Heart left ventricle (tissue), 16 donors: ENCODE measurements at regions of chr6 and their contacts with region 1.

Region 1: GRCh38 chr6:118893807-118894424 is at the start of gene ASF1A:
- DNase-seq: peak; percentile 96 to 98 (median 98)
- ATAC-seq: peak; percentile 93 to 97 (median 95)
- H3K4me3 ChIP-seq: peak within 1 kb of the TSS; percentile 73 to 99 (median 90)
- H3K27ac ChIP-seq: peak within 1 kb of the TSS; percentile 86 to 98 (median 94)
- H3K4me1 ChIP-seq: peaks cover 0 to 59% (median 27%) of the 10 kb centered on the region in 12 donors
- H3K27me3 ChIP-seq: no peaks in the 10 kb centered on the region
- CTCF ChIP-seq: peak; percentile 34 to 81 (median 56)
- POLR2A ChIP-seq: peak; percentile 48 to 76
- total RNA-seq, gene ASF1A: 9.8 to 28.9 (median 22.1) TPM

Region 2: DNA sequence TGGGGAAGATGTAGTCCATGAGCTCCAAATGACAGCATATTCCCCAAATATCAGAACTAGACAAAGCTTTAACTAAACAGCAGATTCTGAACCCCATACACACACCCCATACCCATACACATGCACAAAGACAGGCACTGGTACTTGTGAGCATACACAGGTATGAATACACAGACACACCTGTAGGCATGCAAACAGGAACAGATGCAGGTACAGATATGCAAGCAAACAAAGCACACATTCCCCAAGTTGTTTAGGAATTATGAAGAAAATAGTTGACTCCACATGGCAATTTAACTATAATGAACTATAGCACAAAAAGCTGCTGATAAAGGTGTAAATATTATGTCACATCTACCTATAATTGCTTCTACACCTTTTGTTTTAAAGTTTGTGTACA is 1308.3 kb before region 1 on chr6:
- intact Hi-C with region 1: loop called in 1 of 10 experiments (anchors 10 kb)
- DNase-seq: no peak
- ATAC-seq: no peak
- H3K4me3 ChIP-seq: no peak overlapping the region
- H3K27ac ChIP-seq: no peak overlapping the region
- H3K4me1 ChIP-seq: peaks cover 0 to 7% (median 0%) of the 10 kb centered on the region in 12 donors
- H3K27me3 ChIP-seq: no peaks in the 10 kb centered on the region
- CTCF ChIP-seq: no peak
- POLR2A ChIP-seq: no peak

Region 3: DNA sequence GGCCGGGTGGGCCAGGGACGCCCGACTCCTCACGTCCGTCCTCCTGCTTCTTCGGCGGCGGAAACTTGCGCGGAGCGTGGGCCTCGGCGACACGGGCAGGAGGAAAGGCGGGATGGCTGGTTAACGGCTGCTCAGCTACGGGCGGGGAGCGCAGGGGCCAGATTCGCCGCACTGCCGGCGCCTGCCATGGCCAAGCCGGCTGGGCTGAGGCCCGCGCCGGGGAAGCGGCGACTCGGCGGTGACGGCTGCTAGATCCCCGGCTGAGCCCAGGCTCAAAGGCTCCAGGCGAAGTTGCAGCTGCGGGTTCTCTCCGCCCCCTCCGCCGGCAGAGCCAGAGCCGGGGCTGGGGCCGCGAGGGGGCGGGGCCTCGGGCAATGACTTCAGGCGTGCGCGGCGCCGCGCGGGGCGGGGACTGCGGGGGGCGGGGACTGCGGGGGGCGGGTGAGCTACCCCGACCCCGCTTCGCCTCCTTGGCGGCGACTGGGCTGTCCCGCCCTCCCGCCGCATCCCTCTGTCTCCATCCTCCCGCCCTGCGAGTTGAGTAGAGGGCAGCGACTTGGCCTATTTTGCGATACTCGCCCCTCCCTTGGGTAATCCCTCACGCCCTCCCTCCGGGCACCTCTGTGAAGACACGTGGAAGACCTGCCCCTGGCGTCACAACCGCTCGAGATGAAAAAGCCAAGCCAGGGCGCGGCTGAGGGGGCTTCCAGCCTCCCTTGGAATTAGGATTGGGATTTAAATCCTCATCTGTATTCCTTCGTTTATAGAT is 242.4 kb before region 1 on chr6 and contains the start of gene CEP85L:
- intact Hi-C with region 1: loop called in 1 of 10 experiments (anchors 10 kb)
- DNase-seq: peak; percentile 93 to 96 (median 94)
- ATAC-seq: peak; percentile 95 to 99 (median 98)
- H3K4me3 ChIP-seq: peak within 1 kb of the TSS; percentile 69 to 98 (median 93)
- H3K27ac ChIP-seq: peak within 1 kb of the TSS; percentile 86 to 99 (median 96)
- H3K4me1 ChIP-seq: peaks cover 5 to 30% (median 13%) of the 10 kb centered on the region in 12 donors
- H3K27me3 ChIP-seq: no peaks in the 10 kb centered on the region
- CTCF ChIP-seq: peak in 1 of 12 donors; percentile 5
- POLR2A ChIP-seq: peak; percentile 38 to 91
- total RNA-seq, gene CEP85L: 5.1 to 14.4 (median 7.6) TPM

Region 4: DNA sequence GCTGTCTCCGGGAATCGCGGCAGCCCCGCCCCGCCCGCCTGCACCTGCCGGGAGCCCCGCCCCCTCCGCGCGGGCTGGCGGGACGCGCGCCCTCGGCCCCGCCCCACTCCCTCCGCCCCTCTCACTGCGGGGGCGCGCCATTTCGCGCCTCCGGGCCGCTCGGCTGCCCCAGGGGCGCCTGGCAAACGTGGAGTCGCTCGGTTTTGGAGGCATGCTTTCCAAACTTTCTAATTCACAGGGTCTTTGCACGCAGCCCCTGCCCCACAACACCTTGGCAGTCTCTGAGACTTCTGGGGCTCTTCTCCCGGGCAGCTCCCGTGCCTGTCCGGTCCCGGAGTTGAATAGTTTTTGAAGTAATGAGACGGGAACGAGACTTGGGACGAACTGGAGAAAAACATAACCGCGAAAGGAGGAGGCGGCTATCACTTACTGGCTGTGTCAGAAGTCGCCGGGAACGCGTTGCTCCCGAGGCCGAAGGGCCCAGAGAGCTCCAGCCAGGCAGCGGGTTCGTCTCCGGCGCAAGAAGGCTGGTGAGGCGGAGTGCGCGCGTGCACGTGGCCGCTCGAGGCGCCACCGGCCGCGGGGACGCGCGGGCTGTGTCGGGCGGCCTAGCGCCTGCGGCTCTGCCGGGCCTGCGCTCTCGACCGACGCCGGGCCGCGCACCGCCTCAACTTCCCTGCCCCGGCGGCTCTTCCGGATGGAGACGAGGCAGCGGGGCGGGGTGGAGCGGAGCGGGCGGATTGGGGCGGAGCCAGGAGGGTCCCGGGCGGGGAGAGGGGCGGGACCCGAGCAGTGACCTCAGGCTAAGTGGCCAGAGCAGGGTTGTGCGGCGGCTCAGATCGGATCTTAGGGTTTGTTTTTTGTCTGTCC is 40.8 kb after region 1 on chr6 and contains the start of gene MCM9:
- intact Hi-C with region 1: loop called in 6 of 10 experiments (anchors 2 to 5 kb)
- DNase-seq: peak; percentile 94 to 95 (median 95)
- ATAC-seq: peak; percentile 93 to 99 (median 98)
- H3K4me3 ChIP-seq: peak within 1 kb of the TSS; percentile 64 to 98 (median 81)
- H3K27ac ChIP-seq: peak within 1 kb of the TSS; percentile 86 to 98 (median 93)
- H3K4me1 ChIP-seq: peaks cover 0 to 21% (median 6%) of the 10 kb centered on the region in 12 donors
- H3K27me3 ChIP-seq: no peaks in the 10 kb centered on the region
- CTCF ChIP-seq: no peak
- POLR2A ChIP-seq: peak in 1 of 2 donors; percentile 81
- total RNA-seq, gene MCM9: 2.2 to 8.5 (median 4.9) TPM

Region 5: GRCh38 chr6:119110601-119111548 is 217.0 kb after region 1 on chr6:
- intact Hi-C with region 1: loop called in 1 of 10 experiments (anchors 5 kb)
- DNase-seq: peak in 1 of 5 donors; percentile 16
- ATAC-seq: peak; percentile 52 to 80 (median 63)
- H3K4me3 ChIP-seq: no peak overlapping the region
- H3K27ac ChIP-seq: no peak overlapping the region
- H3K4me1 ChIP-seq: peaks cover 0 to 6% (median 0%) of the 10 kb centered on the region in 12 donors
- H3K27me3 ChIP-seq: no peaks in the 10 kb centered on the region
- CTCF ChIP-seq: peak; percentile 34 to 78 (median 68)
- POLR2A ChIP-seq: no peak